ENCODE measurements at regions of chr13 and their contacts with region 1.

Region 1: DNA sequence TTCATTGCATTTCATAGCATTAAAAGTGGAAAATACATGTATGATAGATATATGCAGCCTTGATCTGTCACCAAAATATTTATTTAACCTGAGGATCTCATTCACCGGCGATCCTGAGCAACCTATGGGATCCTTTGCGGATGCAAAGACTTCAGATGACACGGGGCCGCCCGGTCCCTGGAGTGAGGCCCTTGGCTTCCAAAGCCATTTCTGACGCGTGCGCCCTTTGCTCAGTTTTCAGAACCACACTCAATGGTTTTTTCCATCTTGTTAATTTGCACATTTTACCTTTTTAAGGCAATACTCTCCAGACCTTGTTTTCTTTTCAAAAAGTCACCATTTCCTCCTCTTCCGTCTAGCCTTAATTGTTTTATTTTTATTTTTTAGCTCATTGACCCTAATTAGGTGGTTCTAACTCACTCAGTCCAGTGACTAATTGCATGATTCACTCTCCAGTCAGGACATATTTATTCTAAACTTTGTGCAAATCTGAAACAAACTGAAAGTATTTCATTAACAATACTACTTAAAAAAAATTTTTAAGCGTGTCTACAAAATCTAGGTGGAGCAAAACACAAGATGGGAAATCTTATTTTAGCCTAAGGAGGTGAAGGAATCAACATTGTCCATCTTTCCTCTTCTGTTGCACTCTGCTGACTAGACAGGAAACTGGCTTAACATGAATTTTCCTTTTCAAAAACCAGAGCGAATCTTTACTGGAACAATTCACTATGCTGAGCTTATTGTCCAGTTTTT is 47.9 kb downstream of the COL4A1 start:
- DNase-seq: no peak
- ATAC-seq: no peak

Region 2: GRCh38 chr13:109517517-109517916 is 741.5 kb before region 1 on chr13:
- intact Hi-C with region 1: no loop called
- DNase-seq: no peak
- ATAC-seq: no peak

Region 3: GRCh38 chr13:110301606-110302553 is 42.8 kb after region 1 on chr13:
- intact Hi-C with region 1: loop called (anchors 5 kb)
- DNase-seq: no peak
- ATAC-seq: no peak

Measured in Right ventricle myocardium superior (tissue), 1 donor.